ENCODE measurements at regions of chr10 and their contacts with region 1.

Region 1: GRCh38 chr10:14185316-14186045 is 145.2 kb downstream of the FRMD4A start:
- DNase-seq: peak in 1 of 2 experiments; percentile 33
- ATAC-seq: peak; percentile 81 to 82
- H3K4me3 ChIP-seq: no peak overlapping the region
- H3K27ac ChIP-seq: no peak overlapping the region
- H3K4me1 ChIP-seq: no peaks in the 10 kb centered on the region
- CTCF ChIP-seq: no peak
- EP300 ChIP-seq: no peak
- POLR2A ChIP-seq: peak; percentile 15
- RAD21 ChIP-seq: no peak

Region 2: GRCh38 chr10:14200698-14201544 is 15.4 kb after region 1 on chr10:
- CTCF ChIA-PET with region 1: interaction called, 13 read pairs
- POLR2A ChIA-PET with region 1: no interaction called
- DNase-seq: peak in 1 of 2 experiments; percentile 18
- ATAC-seq: peak; percentile 40 to 58; a peak in 3 of 6 replicates
- H3K4me3 ChIP-seq: no peak overlapping the region
- H3K27ac ChIP-seq: no peak overlapping the region
- H3K4me1 ChIP-seq: no peaks in the 10 kb centered on the region
- CTCF ChIP-seq: peak; percentile 30; the same call in 2 of the 3 replicates
- EP300 ChIP-seq: no peak
- POLR2A ChIP-seq: no peak
- RAD21 ChIP-seq: no peak

Region 3: GRCh38 chr10:14302035-14302434 is 116.6 kb after region 1 on chr10:
- CTCF ChIA-PET with region 1: no interaction called
- POLR2A ChIA-PET with region 1: no interaction called
- DNase-seq: no peak
- ATAC-seq: peak in 1 of 2 experiments; percentile 44; a peak in 1 of 6 replicates
- H3K4me3 ChIP-seq: no peak overlapping the region
- H3K27ac ChIP-seq: no peak overlapping the region
- H3K4me1 ChIP-seq: no peaks in the 10 kb centered on the region
- CTCF ChIP-seq: no peak
- EP300 ChIP-seq: no peak
- POLR2A ChIP-seq: no peak
- RAD21 ChIP-seq: 0 out of 5 replicates have a peak, but pooled peaks of 1 of the 2 experiments have one; percentile 14

Measured in A549 (cell line).